ENCODE measurements at regions of chr20 and their contacts with region 1.

Region 1: DNA sequence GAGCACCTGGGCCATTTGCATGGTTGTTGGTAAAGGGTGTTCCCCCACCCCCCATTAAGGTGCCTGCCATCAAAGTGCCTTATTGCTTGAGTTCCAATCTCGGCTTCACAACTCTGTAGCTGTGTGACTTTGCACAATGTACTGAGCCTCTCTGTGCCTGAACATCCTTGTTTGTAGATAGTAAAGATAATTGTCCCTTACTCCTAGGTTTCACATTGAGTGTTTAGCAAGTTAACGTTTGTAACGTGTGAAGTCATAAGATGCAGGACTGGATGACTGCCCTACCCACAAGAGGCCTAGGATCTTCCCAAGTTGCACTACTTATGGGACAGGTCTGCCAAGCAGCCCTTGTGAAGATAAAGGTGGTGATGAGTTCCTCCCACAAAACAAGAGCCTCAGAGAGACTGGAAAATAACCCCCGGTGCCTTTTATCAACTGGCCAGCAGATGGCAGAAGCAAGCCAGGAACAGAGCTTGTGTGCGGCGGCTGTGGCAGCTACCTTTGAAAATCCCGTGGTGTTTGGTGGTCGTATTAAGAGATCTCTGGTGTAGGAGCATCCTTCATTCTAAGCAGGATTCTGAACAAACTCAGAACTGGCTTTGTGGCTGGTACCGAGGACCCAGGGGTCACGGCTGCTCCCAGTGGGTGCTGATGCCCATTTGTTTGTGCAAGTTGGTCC is 99.0 kb downstream of the CDH26 start:
- DNase-seq: peak; percentile 65 to 85
- ATAC-seq: peak; percentile 41 to 54 (median 41)
- H3K4me3 ChIP-seq: peak overlapping the region; percentile 40
- H3K4me3 Mint-ChIP-seq: peak overlapping the region; percentile 91
- H3K27ac ChIP-seq: peak overlapping the region; percentile 69
- H3K27ac Mint-ChIP-seq: peak overlapping the region; percentile 94 to 96
- H3K4me1 ChIP-seq: peaks cover 59% of the 10 kb centered on the region
- H3K4me1 Mint-ChIP-seq: peaks cover 85 to 93% of the 10 kb centered on the region in 2 donors
- H3K27me3 ChIP-seq: no peaks in the 10 kb centered on the region
- H3K27me3 Mint-ChIP-seq: no peaks in the 10 kb centered on the region
- CTCF ChIP-seq: peak; percentile 91

Region 2: DNA sequence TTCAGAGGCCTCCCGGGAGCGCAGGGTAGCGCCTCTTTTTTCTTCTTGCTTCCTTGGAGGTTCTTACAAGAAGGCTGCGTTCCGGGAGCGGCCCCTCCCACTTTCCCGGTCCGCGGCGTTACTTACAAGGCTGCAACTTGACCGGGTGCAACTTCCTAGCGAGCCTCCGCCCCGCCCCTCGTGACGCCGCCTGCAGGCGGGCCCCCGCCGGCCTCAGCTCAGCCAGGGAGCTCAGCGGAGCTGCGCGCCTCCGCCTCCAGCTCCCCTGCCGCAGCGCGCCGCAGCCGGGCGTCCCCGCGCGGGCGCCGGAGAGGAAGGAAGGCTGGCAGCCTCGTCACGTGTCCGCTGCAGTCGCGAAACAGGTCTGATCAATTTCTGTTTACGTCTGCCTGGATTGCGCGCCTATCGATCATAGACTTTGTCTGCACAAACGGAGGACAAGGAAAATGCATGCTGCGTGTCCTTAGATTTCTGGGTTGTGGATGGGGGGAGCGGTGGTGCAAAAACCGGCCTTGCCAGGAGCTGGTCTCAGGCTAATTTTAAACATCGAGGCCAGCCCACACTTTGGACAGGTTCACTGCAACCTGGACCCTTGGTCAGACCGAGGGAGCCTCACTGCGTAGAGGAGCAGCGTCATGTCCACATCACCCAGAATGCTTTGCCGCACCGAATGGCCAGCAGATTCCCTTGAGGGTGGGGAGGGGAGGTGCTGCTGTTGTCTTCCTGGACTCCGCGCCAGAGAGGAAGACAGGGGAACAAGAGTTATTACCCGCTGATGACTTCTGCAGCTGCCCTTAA is 116.9 kb before region 1 on chr20 and contains the starts of genes FAM217B and PPP1R3D:
- intact Hi-C with region 1: loop called (anchors 5 kb)
- DNase-seq: peak; percentile 84 to 94
- ATAC-seq: peak; percentile 96 to 97 (median 97)
- H3K4me3 ChIP-seq: peak within 1 kb of the TSS; percentile 52
- H3K4me3 Mint-ChIP-seq: peak within 1 kb of the TSS; percentile 94
- H3K27ac ChIP-seq: peak within 1 kb of the TSS; percentile 70
- H3K27ac Mint-ChIP-seq: peak within 1 kb of the TSS; percentile 89 to 93
- H3K4me1 ChIP-seq: peaks cover 18% of the 10 kb centered on the region
- H3K4me1 Mint-ChIP-seq: peaks cover 35 to 46% of the 10 kb centered on the region in 2 donors
- H3K27me3 ChIP-seq: no peaks in the 10 kb centered on the region
- H3K27me3 Mint-ChIP-seq: no peaks in the 10 kb centered on the region
- CTCF ChIP-seq: no peak
- total RNA-seq, gene FAM217B: 17.1 to 31.1 (median 27.7) TPM
- total RNA-seq, gene PPP1R3D: 3.5 to 6.9 (median 6.7) TPM

Region 3: DNA sequence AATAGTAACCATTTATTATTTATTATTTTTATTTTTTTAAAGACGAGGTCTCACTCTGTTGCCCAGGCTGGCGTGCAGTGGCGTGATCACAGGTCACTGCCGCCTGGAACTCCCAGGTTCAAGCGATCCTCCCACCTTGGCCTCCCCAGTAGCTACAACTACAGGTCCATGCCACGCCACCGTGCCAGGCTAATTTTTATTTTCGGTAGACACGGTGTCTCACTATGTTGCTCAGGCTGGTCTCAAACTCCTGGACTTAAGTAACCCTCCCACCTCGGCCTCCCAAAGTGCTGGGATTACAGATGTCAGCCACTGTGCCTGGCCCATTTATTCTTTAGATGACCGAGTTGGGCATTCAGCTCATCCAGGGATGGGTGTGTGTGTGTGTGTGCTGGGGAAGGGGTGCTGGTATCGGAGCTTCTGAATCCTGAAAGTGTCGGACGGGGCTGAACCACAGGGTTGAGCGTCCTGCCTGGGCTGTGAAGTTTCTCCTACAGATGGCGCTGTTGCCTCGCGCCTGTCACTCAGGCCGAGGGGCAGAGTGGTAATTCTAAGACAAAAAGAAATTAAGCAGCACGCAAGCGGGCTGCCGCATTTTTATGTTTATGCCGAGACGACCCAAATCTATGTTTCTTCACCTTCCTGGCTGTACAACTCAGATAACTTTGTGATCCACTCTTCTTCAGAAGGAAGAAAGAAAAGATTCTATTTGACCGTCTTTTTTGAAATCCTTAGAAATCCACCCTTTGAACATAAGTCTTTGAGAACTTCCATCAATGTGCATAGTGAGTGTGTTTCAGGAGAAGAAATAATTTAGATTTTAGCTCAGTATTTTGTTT is 153.7 kb after region 1 on chr20:
- intact Hi-C with region 1: loop called (anchors 5 kb)
- DNase-seq: peak; percentile 63 to 74
- ATAC-seq: peak; percentile 78 to 85 (median 81)
- H3K4me3 ChIP-seq: no peak overlapping the region
- H3K4me3 Mint-ChIP-seq: peak overlapping the region; percentile 41
- H3K27ac ChIP-seq: no peak overlapping the region
- H3K27ac Mint-ChIP-seq: peak overlapping the region in 1 of 2 donors; percentile 31
- H3K4me1 ChIP-seq: peaks cover 10% of the 10 kb centered on the region
- H3K4me1 Mint-ChIP-seq: peaks cover 42 to 55% of the 10 kb centered on the region in 2 donors
- H3K27me3 ChIP-seq: no peaks in the 10 kb centered on the region
- H3K27me3 Mint-ChIP-seq: no peaks in the 10 kb centered on the region
- CTCF ChIP-seq: peak; percentile 92

Region 4: DNA sequence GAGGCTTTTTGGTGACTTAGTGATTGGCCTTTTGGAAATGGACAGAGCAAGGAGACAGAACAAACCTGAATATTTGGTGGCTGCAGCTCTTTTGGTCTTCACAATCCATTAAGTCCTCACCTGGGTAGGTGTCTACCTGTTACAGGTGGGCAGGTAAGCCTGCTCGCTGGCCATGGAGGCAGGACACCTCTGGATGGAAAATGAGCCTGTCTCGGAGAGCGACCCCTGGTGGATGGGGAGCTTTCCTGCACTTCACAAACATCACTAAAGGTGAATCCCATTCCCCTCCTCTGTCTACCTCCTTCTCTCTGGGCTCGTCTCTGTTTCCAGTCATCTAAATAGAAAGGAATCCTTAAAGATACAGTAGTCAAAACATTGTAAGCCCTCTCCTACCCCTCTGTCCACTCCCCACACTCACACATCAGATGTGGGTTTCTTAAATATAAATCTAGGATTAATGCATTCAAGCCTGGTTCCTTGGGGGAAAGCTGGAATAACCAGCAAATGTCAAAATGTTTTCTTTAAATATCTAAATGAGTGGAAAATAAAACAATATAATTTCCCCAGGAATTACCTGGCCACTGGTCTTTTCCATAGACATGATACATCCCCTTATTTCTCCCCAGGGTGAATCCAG is 205.8 kb after region 1 on chr20:
- intact Hi-C with region 1: loop called (anchors 1 kb)
- DNase-seq: peak; percentile 56 to 76
- ATAC-seq: peak; percentile 60 to 80 (median 64)
- H3K4me3 ChIP-seq: no peak overlapping the region
- H3K4me3 Mint-ChIP-seq: no peak overlapping the region
- H3K27ac ChIP-seq: no peak overlapping the region
- H3K27ac Mint-ChIP-seq: no peak overlapping the region
- H3K4me1 ChIP-seq: no peaks in the 10 kb centered on the region
- H3K4me1 Mint-ChIP-seq: no peaks in the 10 kb centered on the region
- H3K27me3 ChIP-seq: no peaks in the 10 kb centered on the region
- H3K27me3 Mint-ChIP-seq: no peaks in the 10 kb centered on the region
- CTCF ChIP-seq: peak; percentile 94

Region 5: DNA sequence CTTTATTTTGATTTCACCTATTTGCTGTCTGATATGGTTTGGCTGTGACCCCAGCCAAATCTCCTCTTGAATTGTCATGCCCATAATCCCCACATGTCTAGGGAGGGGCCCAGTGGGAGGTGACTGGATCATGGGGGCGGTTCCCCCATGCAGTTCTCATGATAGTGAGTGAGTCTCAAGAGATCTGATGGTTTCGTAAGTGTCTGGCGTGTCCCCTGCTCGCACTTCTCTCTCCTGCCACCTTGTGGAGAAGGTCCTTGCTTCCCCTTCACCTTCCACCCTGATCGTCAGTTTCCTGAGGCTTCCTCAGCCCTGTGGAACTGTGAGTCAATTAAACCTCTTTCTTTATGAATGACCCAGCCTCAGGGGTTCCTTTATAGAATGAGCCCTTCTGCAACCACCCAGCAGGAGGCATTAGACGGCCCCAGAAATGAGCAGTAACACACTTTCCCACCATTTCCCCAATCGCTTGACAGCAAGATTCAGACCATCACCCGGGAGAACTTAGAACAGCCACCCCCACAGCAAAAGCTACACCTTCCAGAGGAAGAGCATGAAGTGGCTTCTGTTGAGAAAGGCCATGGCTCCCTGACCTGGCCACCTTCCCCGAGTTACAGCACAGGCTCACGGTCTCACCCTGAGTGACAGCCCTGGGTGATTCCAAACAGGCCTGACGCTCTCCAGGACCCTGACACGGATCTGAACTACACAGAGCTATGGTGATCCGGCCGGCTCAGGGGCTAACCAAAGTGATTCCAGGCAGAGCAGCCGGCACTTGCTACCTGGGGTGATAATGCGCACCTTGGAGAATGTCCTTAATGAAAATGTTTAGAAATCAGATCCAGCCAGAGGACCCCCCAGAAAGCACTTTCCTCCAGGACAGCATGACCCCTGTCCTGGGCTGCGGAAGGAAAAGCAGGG is 1063.6 kb after region 1 on chr20:
- intact Hi-C with region 1: loop called (anchors 2 kb)
- DNase-seq: peak in 1 of 2 donors; percentile 57
- ATAC-seq: peak; percentile 36 to 76 (median 50)
- H3K4me3 ChIP-seq: no peak overlapping the region
- H3K4me3 Mint-ChIP-seq: no peak overlapping the region
- H3K27ac ChIP-seq: no peak overlapping the region
- H3K27ac Mint-ChIP-seq: no peak overlapping the region
- H3K4me1 ChIP-seq: no peaks in the 10 kb centered on the region
- H3K4me1 Mint-ChIP-seq: peaks cover 7% of the 10 kb centered on the region in 2 donors
- H3K27me3 ChIP-seq: no peaks in the 10 kb centered on the region
- H3K27me3 Mint-ChIP-seq: peaks cover 0 to 14% of the 10 kb centered on the region in 2 donors
- CTCF ChIP-seq: peak; percentile 26

Region 6: DNA sequence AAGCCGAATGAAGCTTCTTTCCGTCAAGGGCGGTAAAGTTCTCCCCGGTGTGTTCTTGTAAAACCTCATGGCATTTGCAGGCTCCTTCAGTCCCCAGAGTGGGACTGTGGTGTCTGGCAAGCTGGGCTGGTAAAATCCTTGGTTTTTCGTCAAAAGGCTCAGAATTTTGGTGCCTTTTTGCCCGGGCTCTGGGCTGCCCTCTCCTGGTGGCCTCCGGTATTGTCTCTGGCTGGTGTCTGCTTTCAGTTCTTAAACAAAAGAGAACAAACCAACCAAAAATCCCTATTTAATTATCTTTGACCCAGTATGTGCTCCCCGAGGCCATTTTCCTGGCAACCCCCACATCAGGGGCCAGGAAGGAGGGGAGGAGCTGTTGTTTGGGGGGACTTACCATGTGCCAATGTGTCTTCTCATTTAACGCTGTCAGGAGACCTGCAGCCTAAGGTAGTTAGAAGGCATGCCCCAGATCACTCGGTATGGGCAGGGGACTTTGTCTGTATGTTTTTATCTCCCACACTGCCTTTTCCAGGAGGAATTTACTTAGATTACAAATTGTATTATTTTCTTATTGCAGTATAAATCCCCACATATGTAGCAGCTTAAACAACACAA is 1205.9 kb after region 1 on chr20:
- intact Hi-C with region 1: loop called (anchors 5 kb)
- DNase-seq: peak; percentile 28
- ATAC-seq: peak in 1 of 3 donors; percentile 45
- H3K4me3 ChIP-seq: no peak overlapping the region
- H3K4me3 Mint-ChIP-seq: no peak overlapping the region
- H3K27ac ChIP-seq: no peak overlapping the region
- H3K27ac Mint-ChIP-seq: no peak overlapping the region
- H3K4me1 ChIP-seq: no peaks in the 10 kb centered on the region
- H3K4me1 Mint-ChIP-seq: no peaks in the 10 kb centered on the region
- H3K27me3 ChIP-seq: no peaks in the 10 kb centered on the region
- H3K27me3 Mint-ChIP-seq: peaks cover 7 to 15% of the 10 kb centered on the region in 2 donors
- CTCF ChIP-seq: peak; percentile 75